Endothelial cell of umbilical vein (primary cell): ENCODE measurements at regions of chr1 and their contacts with region 1.

Region 1: DNA sequence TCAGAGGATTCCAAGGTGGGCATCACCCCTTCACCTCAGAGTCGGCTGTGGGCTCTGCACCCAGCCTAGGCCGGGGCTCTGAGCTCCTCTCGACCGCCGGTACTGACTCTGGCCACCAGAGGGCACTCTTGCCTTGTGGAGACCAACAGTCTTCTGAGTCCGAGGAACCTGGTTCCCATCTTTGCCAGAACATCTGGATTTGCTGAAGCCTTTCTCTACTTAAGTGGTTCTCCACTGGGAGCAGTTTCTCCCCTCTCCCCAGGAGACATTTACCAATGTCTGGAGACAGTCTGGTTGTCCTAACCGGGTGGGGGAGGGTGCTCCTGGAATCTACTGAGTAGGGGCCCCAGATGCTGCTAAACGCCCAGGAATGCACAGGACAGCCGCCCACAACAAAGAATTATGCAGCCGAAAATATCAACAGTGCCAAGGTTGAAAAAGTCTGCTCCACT is 9.4 kb downstream of the ETV3L start:
- DNase-seq: peak; percentile 57
- H3K4me3 ChIP-seq: no peak overlapping the region
- H3K27ac ChIP-seq: no peak overlapping the region
- H3K4me1 ChIP-seq: no peaks in the 10 kb centered on the region
- H3K27me3 ChIP-seq: no peaks in the 10 kb centered on the region
- CTCF ChIP-seq: peak; percentile 84 to 90
- POLR2A ChIP-seq: no peak

Region 2: GRCh38 chr1:157050836-157051235 is 39.4 kb before region 1 on chr1:
- CTCF ChIA-PET with region 1: interaction called, 16 read pairs
- POLR2A ChIA-PET with region 1: no interaction called
- dilution Hi-C with region 1: no loop called
- intact Hi-C with region 1: no loop called
- DNase-seq: no peak
- H3K4me3 ChIP-seq: no peak overlapping the region
- H3K27ac ChIP-seq: no peak overlapping the region
- H3K4me1 ChIP-seq: no peaks in the 10 kb centered on the region
- H3K27me3 ChIP-seq: peaks cover 19 to 25% of the 10 kb centered on the region in 2 experiments
- CTCF ChIP-seq: no peak
- POLR2A ChIP-seq: no peak

Region 3: GRCh38 chr1:157105988-157106812 is 16.0 kb after region 1 on chr1:
- CTCF ChIA-PET with region 1: interaction called, 160 read pairs
- POLR2A ChIA-PET with region 1: no interaction called
- dilution Hi-C with region 1: no loop called
- intact Hi-C with region 1: no loop called
- DNase-seq: peak; percentile 67
- H3K4me3 ChIP-seq: no peak overlapping the region
- H3K27ac ChIP-seq: peak overlapping the region; percentile 35
- H3K4me1 ChIP-seq: peaks cover 11% of the 10 kb centered on the region
- H3K27me3 ChIP-seq: peaks cover 4% of the 10 kb centered on the region in 2 experiments
- CTCF ChIP-seq: no peak
- POLR2A ChIP-seq: no peak

Region 4: GRCh38 chr1:157124855-157125254 is 34.6 kb after region 1 on chr1:
- CTCF ChIA-PET with region 1: interaction called, 37 read pairs
- POLR2A ChIA-PET with region 1: no interaction called
- dilution Hi-C with region 1: no loop called
- intact Hi-C with region 1: no loop called
- DNase-seq: no peak
- H3K4me3 ChIP-seq: no peak overlapping the region
- H3K27ac ChIP-seq: no peak overlapping the region
- H3K4me1 ChIP-seq: no peaks in the 10 kb centered on the region
- H3K27me3 ChIP-seq: no peaks in the 10 kb centered on the region
- CTCF ChIP-seq: no peak
- POLR2A ChIP-seq: no peak

Region 5: GRCh38 chr1:157138220-157139051 is 48.2 kb after region 1 on chr1 and contains the start of gene ETV3:
- CTCF ChIA-PET with region 1: interaction called, 96 read pairs
- POLR2A ChIA-PET with region 1: no interaction called
- dilution Hi-C with region 1: no loop called
- intact Hi-C with region 1: loop called (anchors 1 kb)
- DNase-seq: peak; percentile 91
- H3K4me3 ChIP-seq: peak within 1 kb of the TSS; percentile 92 to 99 (median 96)
- H3K27ac ChIP-seq: peak within 1 kb of the TSS; percentile 84
- H3K4me1 ChIP-seq: peaks cover 21% of the 10 kb centered on the region
- H3K27me3 ChIP-seq: no peaks in the 10 kb centered on the region
- CTCF ChIP-seq: no peak
- POLR2A ChIP-seq: peak; percentile 89
- total RNA-seq, gene ETV3: 22.3 and 25.2 TPM in 2 replicates

Region 6: DNA sequence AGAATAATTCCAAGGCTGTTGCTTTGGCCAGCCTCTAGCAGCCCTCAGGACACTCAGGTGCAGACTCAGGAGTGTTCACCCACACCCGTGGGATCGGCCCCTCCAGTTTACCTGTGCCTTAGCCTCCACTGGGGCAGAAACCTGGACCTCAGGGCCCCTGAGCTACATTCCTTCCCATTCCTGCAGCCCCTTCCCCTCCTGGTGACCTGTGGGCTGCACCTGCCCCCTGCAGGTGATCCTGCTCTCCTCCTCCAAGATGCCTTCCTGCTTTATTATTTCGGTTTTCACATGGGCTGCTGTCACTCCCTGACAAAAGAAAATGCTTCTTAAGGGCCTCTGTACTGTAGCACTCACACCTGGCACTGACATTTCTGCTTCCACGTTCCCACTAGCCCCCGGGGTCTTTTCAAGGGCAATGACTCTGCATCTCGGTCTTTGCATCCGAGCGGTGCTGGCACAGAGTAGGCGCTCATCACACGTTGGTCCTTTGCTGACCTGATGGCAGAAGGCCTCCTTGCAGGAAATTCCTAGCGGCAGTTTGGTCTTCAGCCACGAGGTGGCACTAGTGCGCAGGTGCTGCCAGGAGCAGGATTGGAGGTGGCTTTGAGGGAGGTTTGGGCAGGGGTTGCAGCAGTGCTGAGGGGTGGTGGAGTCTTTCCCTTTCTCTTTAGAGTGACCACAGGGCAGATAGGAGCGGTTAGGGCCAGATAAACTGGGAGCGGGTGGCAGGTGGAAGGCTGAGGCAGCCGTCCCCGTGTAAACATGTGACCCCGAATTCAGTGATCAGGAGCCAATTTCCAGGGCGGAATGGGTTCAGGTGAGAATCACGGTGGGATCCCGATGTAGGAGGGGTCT is 73.3 kb after region 1 on chr1:
- CTCF ChIA-PET with region 1: interaction called, 1,121 read pairs
- POLR2A ChIA-PET with region 1: no interaction called
- dilution Hi-C with region 1: no loop called
- intact Hi-C with region 1: no loop called
- DNase-seq: peak; percentile 63
- H3K4me3 ChIP-seq: no peak overlapping the region
- H3K27ac ChIP-seq: no peak overlapping the region
- H3K4me1 ChIP-seq: no peaks in the 10 kb centered on the region
- H3K27me3 ChIP-seq: peaks cover 3 to 8% of the 10 kb centered on the region in 2 experiments
- CTCF ChIP-seq: peak; percentile 89 to 92
- POLR2A ChIP-seq: no peak

Region 7: DNA sequence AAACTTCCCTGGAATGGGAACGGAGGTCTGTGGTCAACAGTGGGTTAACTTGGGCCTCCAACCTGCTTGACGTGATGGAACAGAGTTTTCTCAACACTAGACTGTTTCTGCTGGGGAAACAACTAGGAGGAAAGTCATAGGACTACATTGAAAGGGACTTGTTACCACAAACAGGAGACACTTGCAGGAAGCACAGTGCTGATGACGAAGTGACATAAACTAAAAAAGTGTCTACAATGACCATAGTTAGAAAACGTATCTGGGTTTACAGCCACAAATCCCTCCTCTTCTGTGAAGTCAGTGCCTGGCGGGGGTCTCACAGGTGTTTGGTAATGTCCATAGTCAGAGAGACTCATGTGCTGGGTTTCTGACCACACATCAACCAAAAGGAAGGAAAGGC is 375.8 kb after region 1 on chr1:
- CTCF ChIA-PET with region 1: no interaction called
- POLR2A ChIA-PET with region 1: no interaction called
- dilution Hi-C with region 1: no loop called
- intact Hi-C with region 1: no loop called
- DNase-seq: no peak
- H3K4me3 ChIP-seq: no peak overlapping the region
- H3K27ac ChIP-seq: no peak overlapping the region
- H3K4me1 ChIP-seq: no peaks in the 10 kb centered on the region
- H3K27me3 ChIP-seq: no peaks in the 10 kb centered on the region
- CTCF ChIP-seq: no peak
- POLR2A ChIP-seq: no peak